Sigmoid colon (tissue), 7 donors: ENCODE measurements at regions of chr11 and their contacts with region 1.

Region 1: GRCh38 chr11:63614136-63614664 is at the start of gene PLAAT3:
- DNase-seq: peak; percentile 87
- H3K4me3 ChIP-seq: peak within 1 kb of the TSS; percentile 57 to 81 (median 71)
- H3K27ac ChIP-seq: peak within 1 kb of the TSS; percentile 79 to 85 (median 84)
- H3K4me1 ChIP-seq: peaks cover 0 to 42% (median 38%) of the 10 kb centered on the region in 4 donors
- H3K27me3 ChIP-seq: no peaks in the 10 kb centered on the region
- CTCF ChIP-seq: no peak
- EP300 ChIP-seq: no peak
- POLR2A ChIP-seq: peak in 1 of 2 donors; percentile 40
- total RNA-seq, gene PLAAT3: 34.9 to 59.9 (median 47.9) TPM

Region 2: GRCh38 chr11:63490551-63491239 is 123.5 kb before region 1 on chr11 and contains the start of gene PLAAT5:
- intact Hi-C with region 1: loop called (anchors 5 kb)
- DNase-seq: peak; percentile 76
- H3K4me3 ChIP-seq: peak within 1 kb of the TSS; percentile 54 to 65 (median 57)
- H3K27ac ChIP-seq: peak within 1 kb of the TSS; percentile 76 to 86 (median 82)
- H3K4me1 ChIP-seq: peaks cover 0 to 31% (median 18%) of the 10 kb centered on the region in 4 donors
- H3K27me3 ChIP-seq: no peaks in the 10 kb centered on the region
- CTCF ChIP-seq: no peak
- EP300 ChIP-seq: no peak
- POLR2A ChIP-seq: no peak
- total RNA-seq, gene PLAAT5: 2.0 to 8.4 (median 3.2) TPM

Region 3: GRCh38 chr11:63573881-63574855 is 40.0 kb before region 1 on chr11:
- intact Hi-C with region 1: loop called (anchors 5 kb)
- DNase-seq: peak; percentile 80
- H3K4me3 ChIP-seq: peak overlapping the region; percentile 16 to 41 (median 35)
- H3K27ac ChIP-seq: peak overlapping the region; percentile 77 to 85 (median 80)
- H3K4me1 ChIP-seq: peaks cover 0 to 23% (median 15%) of the 10 kb centered on the region in 4 donors
- H3K27me3 ChIP-seq: no peaks in the 10 kb centered on the region
- CTCF ChIP-seq: no peak
- EP300 ChIP-seq: no peak
- POLR2A ChIP-seq: no peak